ENCODE measurements at regions of chr19 and their contacts with region 1.

Region 1: GRCh38 chr19:55599468-55600279 is at the start of gene FIZ1:
- DNase-seq: peak; percentile 99
- H3K4me3 ChIP-seq: peak within 1 kb of the TSS; percentile 78 to 92 (median 89)
- H3K27ac ChIP-seq: peak within 1 kb of the TSS; percentile 98
- H3K4me1 ChIP-seq: peaks cover 12% of the 10 kb centered on the region
- H3K27me3 ChIP-seq: no peaks in the 10 kb centered on the region
- CTCF ChIP-seq: no peak
- POLR2A ChIP-seq: no peak
- total RNA-seq, gene FIZ1: 14.7 and 15.6 TPM in 2 replicates

Region 2: DNA sequence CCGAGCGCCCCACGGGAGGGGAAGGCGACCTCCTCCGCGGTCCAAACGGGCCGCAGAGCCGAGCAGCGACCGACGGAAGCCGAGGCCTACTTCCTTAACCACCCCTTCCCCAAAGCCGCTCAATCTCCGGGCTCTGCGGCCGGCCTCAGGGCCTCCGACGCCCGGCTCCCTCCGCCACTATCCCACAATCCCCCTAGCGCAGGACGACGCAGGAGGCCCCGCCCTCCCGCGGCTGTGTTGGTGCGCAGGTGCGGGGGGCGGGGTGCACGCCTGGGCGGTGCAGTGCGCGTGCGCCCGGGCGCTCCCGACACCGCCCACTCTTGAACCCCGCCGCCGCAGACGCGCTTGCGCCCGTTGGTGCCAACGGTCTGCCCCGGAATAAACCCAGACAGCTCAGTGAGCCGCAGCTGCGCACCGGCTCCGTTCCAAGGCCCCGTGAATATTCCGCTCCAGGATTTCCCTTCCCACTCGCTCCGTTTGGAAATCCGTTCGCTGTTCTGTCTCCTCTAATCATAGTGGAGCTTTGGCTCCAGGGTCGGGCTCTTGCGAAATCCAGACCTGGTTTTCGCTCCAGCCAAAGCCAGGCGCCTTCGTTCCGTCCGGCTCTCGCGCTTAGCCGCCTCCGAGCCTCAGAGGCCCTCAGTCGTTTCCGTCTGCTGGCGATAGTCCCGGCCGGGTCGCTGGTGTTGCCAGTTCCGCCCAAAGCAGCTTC is 340.7 kb before region 1 on chr19 and contains the start of gene PPP6R1:
- CTCF ChIA-PET with region 1: no interaction called
- POLR2A ChIA-PET with region 1: interaction called, 7 read pairs
- dilution Hi-C with region 1: no loop called
- intact Hi-C with region 1: loop called (anchors 10 kb)
- DNase-seq: peak; percentile 100
- H3K4me3 ChIP-seq: peak within 1 kb of the TSS; percentile 73 to 88 (median 87)
- H3K27ac ChIP-seq: peak within 1 kb of the TSS; percentile 86
- H3K4me1 ChIP-seq: peaks cover 40% of the 10 kb centered on the region
- H3K27me3 ChIP-seq: no peaks in the 10 kb centered on the region
- CTCF ChIP-seq: no peak
- POLR2A ChIP-seq: peak; percentile 72
- total RNA-seq, gene PPP6R1: 68.3 and 71.8 TPM in 2 replicates

Region 3: GRCh38 chr19:55516878-55517620 is 82.6 kb before region 1 on chr19:
- CTCF ChIA-PET with region 1: interaction called, 8 read pairs
- POLR2A ChIA-PET with region 1: interaction called, 3 read pairs
- dilution Hi-C with region 1: loop called (anchors 10 kb)
- intact Hi-C with region 1: loop called (anchors 2 kb)
- DNase-seq: peak; percentile 89
- H3K4me3 ChIP-seq: peak overlapping the region in 2 of 3 experiments; percentile 15 to 40
- H3K27ac ChIP-seq: no peak overlapping the region
- H3K4me1 ChIP-seq: no peaks in the 10 kb centered on the region
- H3K27me3 ChIP-seq: no peaks in the 10 kb centered on the region
- CTCF ChIP-seq: peak; percentile 76 to 95
- POLR2A ChIP-seq: peak; percentile 17

Region 4: GRCh38 chr19:55580628-55581144 is 19.0 kb before region 1 on chr19 and contains the start of gene ZNF579:
- CTCF ChIA-PET with region 1: interaction called, 3 read pairs
- POLR2A ChIA-PET with region 1: interaction called, 8 read pairs
- dilution Hi-C with region 1: no loop called
- intact Hi-C with region 1: loop called (anchors 2 kb)
- DNase-seq: peak; percentile 81
- H3K4me3 ChIP-seq: peak within 1 kb of the TSS; percentile 62 to 98 (median 84)
- H3K27ac ChIP-seq: peak within 1 kb of the TSS; percentile 59
- H3K4me1 ChIP-seq: peaks cover 4% of the 10 kb centered on the region
- H3K27me3 ChIP-seq: peaks cover 4 to 7% of the 10 kb centered on the region in 2 experiments
- CTCF ChIP-seq: no peak
- POLR2A ChIP-seq: peak; percentile 17
- total RNA-seq, gene ZNF579: 15.7 and 15.9 TPM in 2 replicates

Region 5: DNA sequence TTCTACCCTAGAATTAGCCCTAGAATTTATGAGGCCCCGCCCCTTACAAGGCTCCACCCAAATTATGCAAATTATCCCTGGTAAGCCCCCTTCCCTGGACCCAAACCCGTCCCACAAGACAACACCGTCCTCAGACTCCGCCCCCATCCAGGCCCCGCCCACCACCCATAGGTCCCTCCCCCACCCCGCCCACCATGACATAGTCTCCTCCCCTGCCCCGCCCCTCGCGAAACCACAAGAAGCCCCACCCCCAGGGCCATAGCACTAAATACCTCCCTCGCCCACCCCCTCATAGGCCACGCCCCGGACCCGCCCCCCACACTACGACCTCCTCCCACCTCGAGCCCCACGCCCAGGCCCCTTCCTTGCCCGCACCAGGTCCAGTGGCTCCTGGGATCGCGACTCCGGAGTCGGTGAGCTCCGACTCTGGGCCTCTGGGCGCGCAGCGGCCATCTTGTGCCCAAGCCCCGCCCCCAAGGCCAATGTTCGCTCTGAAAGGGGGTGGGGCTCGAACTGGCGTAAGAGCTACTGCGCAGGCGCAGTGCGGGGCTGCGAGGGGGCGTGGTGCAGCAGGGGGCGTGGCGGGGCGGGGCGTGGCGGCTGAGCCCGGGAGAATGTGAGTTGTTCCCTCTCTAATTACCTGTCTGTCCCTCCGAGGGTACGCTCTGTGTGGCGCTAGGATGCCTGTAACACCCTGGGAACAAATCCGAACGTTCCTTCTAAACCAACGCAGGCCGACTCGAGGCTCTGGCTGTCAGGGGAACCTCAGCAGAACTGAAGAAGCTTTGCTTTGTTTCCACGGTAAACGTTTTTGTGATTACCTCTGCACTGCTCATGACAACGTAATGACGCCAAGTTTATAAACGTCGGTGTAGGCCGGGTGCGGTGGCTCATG is 24.7 kb after region 1 on chr19 and contains the start of gene ZNF784:
- CTCF ChIA-PET with region 1: interaction called, 4 read pairs
- POLR2A ChIA-PET with region 1: interaction called, 8 read pairs
- dilution Hi-C with region 1: no loop called
- intact Hi-C with region 1: loop called (anchors 1 kb)
- DNase-seq: peak; percentile 92
- H3K4me3 ChIP-seq: peak within 1 kb of the TSS; percentile 58 to 78 (median 74)
- H3K27ac ChIP-seq: peak within 1 kb of the TSS; percentile 54
- H3K4me1 ChIP-seq: peaks cover 6% of the 10 kb centered on the region
- H3K27me3 ChIP-seq: no peaks in the 10 kb centered on the region
- CTCF ChIP-seq: no peak
- POLR2A ChIP-seq: peak; percentile 80
- total RNA-seq, gene ZNF784: 4.9 and 7.1 TPM in 2 replicates

Measured in endothelial cell of umbilical vein (primary cell).